ENCODE measurements at regions of chr11 and their contacts with region 1.

Region 1: GRCh38 chr11:128831174-128832120 is 35.6 kb downstream of the KCNJ1 start:
- DNase-seq: peak; percentile 73
- ATAC-seq: peak; percentile 76 to 78

Region 2: GRCh38 chr11:128172046-128172878 is 659.2 kb before region 1 on chr11:
- intact Hi-C with region 1: loop called (anchors 5 to 10 kb)
- DNase-seq: peak; percentile 85
- ATAC-seq: peak; percentile 83 to 91

Region 3: GRCh38 chr11:128745311-128746136 is 85.9 kb before region 1 on chr11:
- intact Hi-C with region 1: no loop called
- DNase-seq: peak; percentile 55
- ATAC-seq: peak in 1 of 2 donors; percentile 16